ENCODE measurements at regions of chr12 and their contacts with region 1.

Region 1: DNA sequence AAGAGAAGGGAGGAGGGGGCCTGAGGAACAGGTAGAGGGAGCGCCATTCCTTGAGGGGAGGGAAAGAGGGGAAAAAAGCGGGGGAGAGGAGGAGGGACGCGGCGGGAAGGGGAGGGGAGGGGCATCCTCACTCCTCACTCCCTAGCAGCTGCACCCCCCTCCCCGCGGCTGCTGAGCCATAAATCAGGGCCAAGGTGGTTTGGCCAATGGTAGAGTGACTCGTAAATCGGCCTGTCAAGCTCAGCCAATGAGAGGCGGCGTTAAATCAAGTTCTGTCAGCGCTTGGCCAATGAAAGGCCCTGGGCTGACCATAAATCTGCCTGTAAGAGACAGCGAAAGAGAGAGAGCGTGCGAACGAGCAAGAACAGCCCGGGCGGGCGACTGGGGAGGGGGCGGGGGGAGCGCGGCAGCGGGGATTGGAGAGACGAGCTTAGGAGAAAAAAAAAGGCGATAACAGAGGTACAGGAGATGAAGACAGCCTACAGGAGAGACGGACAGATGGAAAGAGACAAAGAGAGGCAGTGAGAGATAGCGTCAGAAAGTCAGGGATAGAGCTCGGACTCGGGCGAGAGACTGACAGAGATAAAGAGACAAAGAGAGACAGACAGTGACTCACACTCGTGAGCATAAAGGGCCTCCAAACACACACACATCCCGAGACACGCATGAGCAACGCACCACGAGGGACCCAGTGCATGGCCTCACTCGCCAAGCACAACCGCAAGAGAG is 5.1 kb downstream of the GPR84 start:
- DNase-seq: peak; percentile 84
- ATAC-seq: peak; percentile 96
- H3K4me3 Mint-ChIP-seq: no peak overlapping the region
- H3K27ac Mint-ChIP-seq: no peak overlapping the region
- H3K4me1 Mint-ChIP-seq: peaks cover 26% of the 10 kb centered on the region
- H3K27me3 Mint-ChIP-seq: no peaks in the 10 kb centered on the region

Region 2: DNA sequence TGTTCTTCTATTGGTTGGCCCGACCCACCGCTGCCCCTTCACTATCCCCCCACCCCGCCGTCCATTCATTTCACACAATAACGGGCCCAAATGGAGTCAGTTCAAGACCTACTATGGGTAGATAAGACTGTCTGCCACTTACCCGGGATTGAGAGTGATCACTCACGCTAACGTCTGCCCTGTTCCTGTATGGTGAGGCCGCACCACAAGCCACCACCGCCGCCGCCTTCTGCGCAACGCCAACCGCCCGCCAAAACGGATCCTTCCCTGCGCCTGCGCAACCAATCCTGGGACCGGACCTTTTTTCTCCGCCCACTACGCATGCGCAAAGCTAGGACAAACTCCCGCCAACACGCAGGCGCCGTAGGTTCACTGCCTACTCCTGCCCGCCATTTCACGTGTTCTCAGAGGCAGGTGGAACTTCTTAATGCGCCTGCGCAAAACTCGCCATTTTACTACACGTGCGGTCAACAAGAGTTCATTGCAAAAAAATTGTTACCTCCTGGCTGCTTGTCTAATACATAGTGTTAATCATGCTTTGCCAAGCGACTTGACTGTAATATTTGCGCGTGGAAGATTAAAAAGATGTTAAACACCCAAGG is 79.2 kb before region 1 on chr12 and contains the start of gene CBX5:
- POLR2A ChIA-PET with region 1: interaction called, 32 read pairs
- DNase-seq: peak; percentile 98
- ATAC-seq: peak; percentile 64
- H3K4me3 Mint-ChIP-seq: no peak within 1 kb of the TSS
- H3K27ac Mint-ChIP-seq: no peak within 1 kb of the TSS
- H3K4me1 Mint-ChIP-seq: peaks cover 44% of the 10 kb centered on the region
- H3K27me3 Mint-ChIP-seq: no peaks in the 10 kb centered on the region
- total RNA-seq, gene CBX5: 113 TPM

Region 3: GRCh38 chr12:54294152-54294952 is 64.8 kb before region 1 on chr12:
- POLR2A ChIA-PET with region 1: interaction called, 16 read pairs
- DNase-seq: peak; percentile 73
- ATAC-seq: peak; percentile 78
- H3K4me3 Mint-ChIP-seq: no peak overlapping the region
- H3K27ac Mint-ChIP-seq: no peak overlapping the region
- H3K4me1 Mint-ChIP-seq: no peaks in the 10 kb centered on the region
- H3K27me3 Mint-ChIP-seq: peaks cover 25% of the 10 kb centered on the region

Region 4: DNA sequence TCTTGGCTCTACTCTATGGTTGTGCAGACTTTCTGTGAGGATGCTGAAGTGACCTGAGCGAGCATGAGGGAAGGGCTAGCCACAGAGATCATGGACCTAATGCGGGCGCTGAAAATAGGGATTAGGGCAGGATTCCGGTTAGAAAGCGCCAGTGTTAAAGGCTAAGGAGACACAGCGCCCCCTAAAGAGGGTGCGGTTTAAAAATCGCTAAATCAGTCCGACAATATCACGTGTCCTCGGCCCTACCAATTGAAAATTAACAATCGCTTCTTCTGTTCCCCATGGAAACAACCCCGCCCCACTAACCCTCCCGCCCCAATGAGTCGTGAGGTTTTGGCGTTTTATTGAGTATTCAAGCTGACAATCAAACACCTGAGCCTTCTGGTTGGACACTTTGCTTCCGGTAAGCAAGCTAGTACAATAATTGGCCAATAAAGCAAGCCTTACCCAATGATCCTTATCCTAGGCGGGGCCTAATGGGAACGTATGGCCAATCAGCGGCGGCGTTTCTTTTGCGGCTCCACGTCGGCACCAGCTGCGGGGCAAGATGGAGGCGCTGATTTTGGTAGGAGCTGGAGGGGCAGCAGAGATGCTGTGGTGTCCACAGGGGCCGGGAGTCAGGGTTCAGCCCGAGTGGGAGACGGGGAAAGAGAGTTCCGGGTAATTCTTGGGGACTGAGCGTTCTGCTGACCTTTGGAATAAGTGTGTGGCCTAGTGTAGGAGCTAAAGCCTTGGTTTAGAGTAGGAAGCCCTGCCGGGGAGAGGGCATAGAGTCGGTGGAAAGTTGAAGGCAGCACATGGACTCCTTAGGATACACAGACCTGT is 34.4 kb before region 1 on chr12 and contains the start of gene COPZ1:
- POLR2A ChIA-PET with region 1: interaction called, 20 read pairs
- DNase-seq: peak; percentile 88
- ATAC-seq: peak; percentile 99
- H3K4me3 Mint-ChIP-seq: peak within 1 kb of the TSS; percentile 96
- H3K27ac Mint-ChIP-seq: peak within 1 kb of the TSS; percentile 87
- H3K4me1 Mint-ChIP-seq: peaks cover 24% of the 10 kb centered on the region
- H3K27me3 Mint-ChIP-seq: no peaks in the 10 kb centered on the region
- total RNA-seq, gene COPZ1: 93.1 to 94.6 TPM

Measured in activated naive CD8-positive, alpha-beta T cell treated with anti-CD3 and anti-CD28 coated beads, Interleukin-2, amount 10 ng/mL, durations not matched to agents 7 days and 5 days (primary cell).